PC-3 (cell line): ENCODE measurements at regions of chr1 and their contacts with region 1.

Region 1: GRCh38 chr1:151372061-151372934 is at the start of gene SELENBP1:
- DNase-seq: peak; percentile 85
- ATAC-seq: peak; percentile 72
- H3K4me3 ChIP-seq: peak within 1 kb of the TSS; percentile 61
- H3K27ac ChIP-seq: no peak within 1 kb of the TSS
- H3K4me1 ChIP-seq: peaks cover 31% of the 10 kb centered on the region
- H3K27me3 ChIP-seq: no peaks in the 10 kb centered on the region
- CTCF ChIP-seq: no peak
- total RNA-seq, gene SELENBP1: 29.8 and 73.5 TPM in 2 replicates

Region 2: DNA sequence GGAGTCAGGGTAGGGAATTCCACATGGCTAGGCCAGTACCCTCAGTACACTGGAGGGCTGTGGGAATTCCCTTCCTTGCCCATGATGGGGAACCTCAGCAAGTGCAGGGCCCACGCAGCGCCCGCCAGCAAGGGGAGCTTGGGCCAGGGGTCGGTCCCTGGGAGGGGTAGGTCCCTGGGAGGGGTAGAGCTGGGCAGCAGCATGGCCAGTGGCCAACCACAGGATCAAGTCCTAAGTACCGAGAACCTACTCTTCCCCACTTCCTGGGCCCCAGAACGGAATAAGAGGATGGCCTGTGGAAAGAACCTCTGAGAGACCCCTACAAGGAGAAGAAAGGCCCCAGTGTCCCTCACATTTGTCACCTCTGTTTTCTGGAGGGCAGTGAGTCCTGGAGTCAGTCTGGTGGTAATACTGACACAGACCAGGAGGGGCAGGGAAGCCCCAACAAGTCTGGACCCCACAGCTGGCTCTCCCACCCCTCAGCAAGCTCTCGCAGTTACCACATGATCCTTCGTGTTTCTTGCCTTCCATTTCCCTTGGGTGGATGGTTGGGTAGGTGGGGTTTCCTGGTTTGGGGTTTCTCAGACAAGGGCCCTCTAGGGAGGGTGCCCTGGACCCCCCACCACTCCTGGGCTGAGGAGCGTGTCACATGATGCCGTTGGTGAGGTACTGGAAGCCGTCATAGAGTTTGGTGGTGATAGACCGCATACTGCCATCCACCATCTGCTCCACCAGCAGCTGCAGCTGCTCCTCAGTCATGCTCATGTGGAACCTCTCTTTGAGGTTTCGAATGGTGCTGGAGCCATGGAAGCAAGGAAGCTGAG is 79.9 kb before region 1 on chr1:
- CTCF ChIA-PET with region 1: no interaction called
- POLR2A ChIA-PET with region 1: interaction called, 11 read pairs
- intact Hi-C with region 1: no loop called
- DNase-seq: no peak
- ATAC-seq: no peak; the same call in 1 of the 2 replicates
- H3K4me3 ChIP-seq: no peak overlapping the region
- H3K27ac ChIP-seq: no peak overlapping the region
- H3K4me1 ChIP-seq: no peaks in the 10 kb centered on the region
- H3K27me3 ChIP-seq: no peaks in the 10 kb centered on the region
- CTCF ChIP-seq: 0 out of 2 replicates have a peak, but pooled peaks have one; percentile 9

Region 3: GRCh38 chr1:151346769-151347522 is 25.4 kb before region 1 on chr1 and contains the start of gene RFX5:
- CTCF ChIA-PET with region 1: no interaction called
- POLR2A ChIA-PET with region 1: no interaction called
- intact Hi-C with region 1: loop called (anchors 1 kb)
- DNase-seq: peak; percentile 100
- ATAC-seq: peak; percentile 98
- H3K4me3 ChIP-seq: peak within 1 kb of the TSS; percentile 76
- H3K27ac ChIP-seq: peak within 1 kb of the TSS; percentile 85
- H3K4me1 ChIP-seq: peaks cover 14% of the 10 kb centered on the region
- H3K27me3 ChIP-seq: no peaks in the 10 kb centered on the region
- CTCF ChIP-seq: no peak
- total RNA-seq, gene RFX5: 34.1 and 41.0 TPM in 2 replicates

Region 4: GRCh38 chr1:151399890-151400495 is 27.7 kb after region 1 on chr1:
- CTCF ChIA-PET with region 1: no interaction called
- POLR2A ChIA-PET with region 1: no interaction called
- intact Hi-C with region 1: loop called (anchors 2 kb)
- DNase-seq: no peak
- ATAC-seq: peak; percentile 34
- H3K4me3 ChIP-seq: peak overlapping the region; percentile 91
- H3K27ac ChIP-seq: peak overlapping the region; percentile 70
- H3K4me1 ChIP-seq: peaks cover 13% of the 10 kb centered on the region
- H3K27me3 ChIP-seq: no peaks in the 10 kb centered on the region
- CTCF ChIP-seq: no peak

Region 5: GRCh38 chr1:151425103-151425502 is 52.8 kb after region 1 on chr1:
- CTCF ChIA-PET with region 1: no interaction called
- POLR2A ChIA-PET with region 1: no interaction called
- intact Hi-C with region 1: no loop called
- DNase-seq: no peak
- ATAC-seq: no peak
- H3K4me3 ChIP-seq: no peak overlapping the region
- H3K27ac ChIP-seq: no peak overlapping the region
- H3K4me1 ChIP-seq: no peaks in the 10 kb centered on the region
- H3K27me3 ChIP-seq: no peaks in the 10 kb centered on the region
- CTCF ChIP-seq: no peak

Region 6: GRCh38 chr1:151762941-151763921 is 390.9 kb after region 1 on chr1 and contains the start of gene MRPL9:
- CTCF ChIA-PET with region 1: no interaction called
- POLR2A ChIA-PET with region 1: no interaction called
- intact Hi-C with region 1: no loop called
- DNase-seq: peak; percentile 89
- ATAC-seq: peak; percentile 98
- H3K4me3 ChIP-seq: peak within 1 kb of the TSS; percentile 77
- H3K27ac ChIP-seq: peak within 1 kb of the TSS; percentile 47
- H3K4me1 ChIP-seq: peaks cover 36% of the 10 kb centered on the region
- H3K27me3 ChIP-seq: no peaks in the 10 kb centered on the region
- CTCF ChIP-seq: no peak
- total RNA-seq, gene MRPL9: 229 and 260 TPM in 2 replicates